ENCODE measurements at regions of chr5 and their contacts with region 1.

Region 1: DNA sequence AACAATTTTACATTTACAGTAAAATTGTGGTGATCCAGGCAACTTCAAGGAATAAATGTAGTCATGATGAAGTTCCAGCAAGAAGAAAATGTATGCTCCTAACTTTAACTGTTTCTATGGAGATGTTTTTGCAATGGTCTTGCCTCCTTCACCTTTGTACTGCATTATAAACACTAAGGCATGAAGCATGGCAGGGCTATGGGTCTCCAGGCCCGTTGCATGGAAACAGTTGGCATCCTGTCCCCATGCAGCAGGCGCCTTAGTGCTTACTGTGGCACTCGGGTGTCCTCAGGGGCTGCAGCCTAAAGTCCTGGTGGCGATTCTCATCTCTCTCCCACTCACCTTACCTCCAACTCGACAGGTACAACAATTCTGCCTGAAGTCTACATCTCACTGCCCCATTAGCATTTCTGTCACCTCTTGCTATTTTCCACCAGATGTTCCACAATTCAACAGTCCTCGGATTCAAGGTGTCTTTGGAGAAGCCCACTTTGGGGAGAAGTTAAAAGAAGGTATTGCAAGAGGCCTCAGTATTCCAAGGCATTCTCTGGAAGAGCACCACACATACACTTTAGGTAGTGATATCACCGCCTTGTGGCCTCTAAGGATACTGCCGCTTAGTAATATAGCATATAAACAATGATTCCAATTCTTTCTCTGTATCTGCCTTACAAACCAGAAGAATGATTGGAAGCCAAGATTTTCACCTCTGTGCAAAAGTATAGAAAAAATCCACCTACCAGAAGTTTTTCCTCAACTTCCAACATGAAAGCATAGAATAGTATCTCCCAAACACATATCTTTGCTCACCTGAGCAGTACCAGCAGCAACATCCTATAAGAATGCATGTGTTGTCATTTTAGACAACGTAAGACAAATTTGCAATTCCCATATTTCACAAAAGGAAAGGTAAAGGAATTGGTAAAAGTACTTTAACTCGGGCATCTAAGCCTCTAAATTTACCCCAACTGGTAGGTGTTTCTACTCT is 5.1 kb downstream of the LIFR start:
- DNase-seq: peak in 1 of 2 experiments; percentile 25
- H3K4me3 ChIP-seq: no peak overlapping the region
- H3K27ac ChIP-seq: no peak overlapping the region
- H3K4me1 ChIP-seq: peaks cover 11% of the 10 kb centered on the region
- H3K27me3 ChIP-seq: 0 out of 2 replicates have a peak, but pooled peaks cover 15% of the 10 kb centered on the region
- CTCF ChIP-seq: peak; percentile 80

Region 2: GRCh38 chr5:38515646-38516045 is 35.7 kb before region 1 on chr5:
- CTCF ChIA-PET with region 1: no interaction called
- POLR2A ChIA-PET with region 1: no interaction called
- intact Hi-C with region 1: loop called (anchors 2 kb)
- DNase-seq: no peak
- H3K4me3 ChIP-seq: no peak overlapping the region
- H3K27ac ChIP-seq: no peak overlapping the region
- H3K4me1 ChIP-seq: no peaks in the 10 kb centered on the region
- H3K27me3 ChIP-seq: no peaks in the 10 kb centered on the region
- CTCF ChIP-seq: no peak

Region 3: DNA sequence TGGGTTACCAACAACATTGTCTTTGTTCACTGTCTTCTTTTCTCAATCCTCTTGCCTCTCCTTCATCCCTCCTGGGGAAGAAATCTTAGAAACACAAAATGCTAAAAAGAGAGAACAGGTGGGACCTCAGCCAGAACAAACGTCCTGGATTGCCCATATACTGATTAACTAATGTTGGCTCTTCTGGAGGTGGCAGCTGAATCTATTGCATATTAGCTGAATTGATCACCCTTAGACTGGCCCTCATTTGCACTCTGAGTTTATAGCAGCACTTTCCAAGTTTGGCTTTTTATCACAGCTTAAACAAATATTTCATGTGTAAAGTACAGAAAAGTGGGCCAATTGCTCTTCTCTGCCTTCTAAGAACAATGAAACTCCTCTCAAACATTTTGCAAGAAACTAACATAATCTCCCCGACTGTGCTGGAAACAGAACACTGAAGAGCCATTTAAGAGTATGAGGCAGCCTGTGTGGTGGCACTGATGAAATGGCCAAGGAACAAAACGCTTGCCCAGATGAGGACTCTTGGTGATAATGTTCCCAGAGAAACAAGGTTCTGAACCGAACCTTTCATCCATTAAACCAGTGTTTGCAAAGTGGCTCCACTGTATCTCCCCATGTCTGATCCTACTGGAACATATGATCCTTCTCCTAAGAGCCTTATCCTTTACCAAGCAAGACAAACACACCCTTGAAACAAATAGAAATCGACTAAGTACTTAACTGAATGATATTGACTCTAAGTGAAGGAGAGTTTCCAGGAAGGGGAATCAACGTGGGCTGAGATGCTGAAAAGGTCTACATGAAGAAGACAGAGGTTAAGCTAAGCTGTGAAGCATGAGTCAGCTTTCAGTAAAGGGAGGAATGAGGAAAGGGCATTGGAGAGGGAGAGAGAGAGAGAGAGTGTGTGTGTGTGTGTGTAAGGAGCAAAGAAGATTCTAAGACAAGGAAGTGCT is 88.3 kb after region 1 on chr5:
- CTCF ChIA-PET with region 1: no interaction called
- POLR2A ChIA-PET with region 1: no interaction called
- intact Hi-C with region 1: no loop called
- DNase-seq: peak in 1 of 2 experiments; percentile 33
- H3K4me3 ChIP-seq: no peak overlapping the region
- H3K27ac ChIP-seq: no peak overlapping the region
- H3K4me1 ChIP-seq: peaks cover 14% of the 10 kb centered on the region
- H3K27me3 ChIP-seq: no peaks in the 10 kb centered on the region
- CTCF ChIP-seq: no peak

Region 4: DNA sequence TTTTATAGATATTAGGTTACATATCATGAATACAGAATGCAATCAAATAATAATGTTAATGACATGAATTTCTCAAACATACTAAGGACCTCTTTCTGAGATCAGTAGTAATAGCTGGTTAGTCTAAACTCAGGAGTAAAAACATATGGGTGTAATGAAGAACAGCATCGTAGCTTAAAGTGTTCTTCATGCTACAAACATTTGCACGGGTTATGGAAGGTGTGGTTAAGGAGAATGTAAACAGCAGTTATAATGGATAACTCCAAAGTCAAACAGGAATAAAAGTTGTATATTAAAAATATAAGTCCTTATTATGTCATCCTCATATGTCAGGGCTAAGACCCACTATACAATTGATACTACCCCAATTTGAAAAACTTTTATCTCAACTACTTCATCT is 410.4 kb after region 1 on chr5:
- CTCF ChIA-PET with region 1: no interaction called
- POLR2A ChIA-PET with region 1: no interaction called
- intact Hi-C with region 1: no loop called
- DNase-seq: no peak
- H3K4me3 ChIP-seq: no peak overlapping the region
- H3K27ac ChIP-seq: no peak overlapping the region
- H3K4me1 ChIP-seq: no peaks in the 10 kb centered on the region
- H3K27me3 ChIP-seq: no peaks in the 10 kb centered on the region
- CTCF ChIP-seq: no peak

Measured in PC-9 (cell line).